Activated T-helper 1 cell treated with anti-CD3 and anti-CD28 coated beads, Interleukin-12 subunit alpha, Interleukin-12 subunit beta, Interleukin-2, Interleukin-4 antibody, amounts not matched to agents 30 ng/mL and 10 ng/mL and 1 ng/mL, durations not matched to agents 14 hours and 24 hours and 36 hours (primary cell): ENCODE measurements at regions of chr10 and their contacts with region 1.

Region 1: GRCh38 chr10:96831867-96832720 is at the start of gene LCOR:
- DNase-seq: peak; percentile 76
- H3K4me3 Mint-ChIP-seq: peak within 1 kb of the TSS; percentile 89
- H3K27ac Mint-ChIP-seq: peak within 1 kb of the TSS; percentile 96
- H3K4me1 Mint-ChIP-seq: peaks cover 53% of the 10 kb centered on the region
- H3K27me3 Mint-ChIP-seq: peaks cover 2% of the 10 kb centered on the region
- total RNA-seq, gene LCOR: 26.2 and 31.9 TPM in 2 replicates

Region 2: DNA sequence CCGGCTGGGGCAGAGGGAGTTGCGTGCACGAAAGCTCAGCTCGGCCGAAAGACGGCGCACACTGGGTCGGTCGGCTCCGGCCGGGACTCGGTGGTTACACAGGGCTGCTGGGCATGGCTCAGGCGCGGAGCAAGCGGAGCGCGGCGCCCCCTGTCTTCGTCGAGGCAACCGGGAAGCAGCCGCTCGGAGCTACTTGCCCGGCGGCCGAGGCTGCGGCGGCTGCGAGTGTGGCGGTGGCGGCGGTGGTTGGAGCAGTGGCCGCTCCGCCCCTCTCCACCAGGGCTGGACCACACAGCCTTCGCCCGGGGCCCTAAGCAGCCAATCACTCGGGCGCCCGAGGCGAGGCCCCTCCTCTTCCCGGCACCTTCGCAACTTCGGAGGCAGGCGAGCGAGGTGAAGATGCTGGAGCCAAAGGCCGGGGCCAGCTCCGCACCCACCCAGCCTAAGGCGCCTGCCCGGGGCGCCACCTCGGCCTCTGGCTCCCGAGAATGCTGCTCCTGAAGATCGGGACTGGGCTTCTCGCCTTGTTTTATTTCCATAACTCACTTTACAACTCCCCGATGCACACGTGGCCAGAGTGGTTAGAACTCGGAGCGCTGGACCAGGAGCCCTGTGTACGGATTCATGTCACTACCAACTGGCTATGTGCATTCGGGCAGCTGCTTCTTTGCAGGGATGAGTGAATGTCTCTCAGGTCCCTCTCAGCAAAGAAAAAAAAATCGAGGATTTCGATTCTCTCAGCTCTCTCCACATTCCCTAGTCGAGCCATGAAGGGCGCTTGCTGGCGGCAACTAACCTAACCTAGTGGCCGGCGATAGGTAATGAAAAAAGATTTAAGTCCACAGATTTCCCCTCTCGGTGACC is 318.2 kb before region 1 on chr10 and contains the start of gene TLL2:
- intact Hi-C with region 1: loop called (anchors 2 kb)
- DNase-seq: peak; percentile 63
- H3K4me3 Mint-ChIP-seq: peak within 1 kb of the TSS; percentile 66
- H3K27ac Mint-ChIP-seq: no peak within 1 kb of the TSS
- H3K4me1 Mint-ChIP-seq: peaks cover 7% of the 10 kb centered on the region
- H3K27me3 Mint-ChIP-seq: peaks cover 33% of the 10 kb centered on the region
- total RNA-seq, gene TLL2: 0.07 TPM in 1 of 2 replicates, not detected in the other

Region 3: DNA sequence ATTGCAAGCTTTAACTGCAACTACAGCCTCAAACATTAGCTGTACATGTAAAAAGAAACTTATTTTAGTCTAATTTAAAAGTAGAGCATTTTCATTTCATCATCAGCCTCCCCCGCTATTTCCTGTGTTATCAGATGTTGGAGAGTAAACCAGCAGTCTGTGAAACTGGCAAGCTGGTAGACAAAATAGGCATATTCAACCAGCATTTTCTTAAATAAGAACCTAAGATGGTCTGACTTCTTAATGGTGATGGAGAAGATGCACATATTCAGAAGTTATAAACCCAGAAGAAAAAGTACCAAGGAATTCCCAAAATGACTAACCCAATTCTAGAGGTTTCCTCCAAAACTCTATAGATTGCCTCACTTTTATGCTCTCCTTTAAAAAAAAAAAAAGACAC is 136.7 kb before region 1 on chr10:
- intact Hi-C with region 1: loop called (anchors 2 kb)
- DNase-seq: no peak
- H3K4me3 Mint-ChIP-seq: peak overlapping the region; percentile 35
- H3K27ac Mint-ChIP-seq: peak overlapping the region; percentile 61
- H3K4me1 Mint-ChIP-seq: peaks cover 37% of the 10 kb centered on the region
- H3K27me3 Mint-ChIP-seq: no peaks in the 10 kb centered on the region

Region 4: DNA sequence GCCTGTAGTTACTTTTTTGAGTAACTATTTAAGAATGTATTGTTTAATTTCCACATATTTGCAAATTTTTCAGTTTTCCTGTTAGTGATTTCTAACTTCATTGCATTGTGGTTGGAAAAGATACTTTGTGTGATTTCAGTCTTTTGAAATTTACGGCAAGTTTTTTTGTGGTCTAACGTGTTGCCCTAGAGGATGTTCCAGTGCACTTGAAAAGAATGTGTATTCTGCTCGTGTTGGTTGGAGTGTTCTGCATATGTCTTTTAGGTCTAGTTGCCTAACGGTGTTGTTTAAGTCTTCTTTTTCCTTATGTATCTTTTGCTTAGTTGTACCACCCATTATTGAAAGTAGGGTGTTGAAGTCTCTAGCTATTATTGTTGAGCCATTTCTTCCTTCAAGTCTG is 59.7 kb after region 1 on chr10:
- intact Hi-C with region 1: loop called (anchors 2 kb)
- DNase-seq: no peak
- H3K4me3 Mint-ChIP-seq: no peak overlapping the region
- H3K27ac Mint-ChIP-seq: peak overlapping the region; percentile 62
- H3K4me1 Mint-ChIP-seq: peaks cover 48% of the 10 kb centered on the region
- H3K27me3 Mint-ChIP-seq: no peaks in the 10 kb centered on the region

Region 5: GRCh38 chr10:97016728-97017473 is 184.8 kb after region 1 on chr10:
- intact Hi-C with region 1: loop called (anchors 2 kb)
- DNase-seq: peak; percentile 6
- H3K4me3 Mint-ChIP-seq: peak overlapping the region; percentile 48
- H3K27ac Mint-ChIP-seq: peak overlapping the region; percentile 82
- H3K4me1 Mint-ChIP-seq: peaks cover 27% of the 10 kb centered on the region
- H3K27me3 Mint-ChIP-seq: peaks cover 2% of the 10 kb centered on the region

Region 6: DNA sequence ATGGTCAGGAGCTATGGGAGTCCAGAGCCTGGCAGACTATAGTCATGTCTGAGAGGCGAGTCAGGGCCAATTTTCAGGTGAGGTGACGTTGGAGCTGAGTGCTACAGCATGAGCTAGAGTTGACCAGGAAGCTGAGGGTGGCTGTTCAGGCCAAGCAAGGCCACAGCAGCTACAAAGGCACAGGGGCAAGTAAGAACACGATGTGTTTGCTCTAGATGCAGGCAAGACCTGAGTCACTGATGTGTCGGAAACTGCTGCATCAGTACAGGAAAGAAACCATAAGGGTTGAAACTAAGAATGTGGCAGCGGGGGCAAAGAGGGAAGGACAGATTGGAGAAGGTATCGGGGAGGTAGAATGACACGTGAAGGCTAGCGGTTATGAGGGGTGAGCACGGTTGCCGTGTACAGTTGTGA is 580.8 kb after region 1 on chr10:
- intact Hi-C with region 1: loop called (anchors 5 kb)
- DNase-seq: peak; percentile 52
- H3K4me3 Mint-ChIP-seq: peak overlapping the region; percentile 47
- H3K27ac Mint-ChIP-seq: peak overlapping the region; percentile 95
- H3K4me1 Mint-ChIP-seq: peaks cover 55% of the 10 kb centered on the region
- H3K27me3 Mint-ChIP-seq: no peaks in the 10 kb centered on the region

Region 7: DNA sequence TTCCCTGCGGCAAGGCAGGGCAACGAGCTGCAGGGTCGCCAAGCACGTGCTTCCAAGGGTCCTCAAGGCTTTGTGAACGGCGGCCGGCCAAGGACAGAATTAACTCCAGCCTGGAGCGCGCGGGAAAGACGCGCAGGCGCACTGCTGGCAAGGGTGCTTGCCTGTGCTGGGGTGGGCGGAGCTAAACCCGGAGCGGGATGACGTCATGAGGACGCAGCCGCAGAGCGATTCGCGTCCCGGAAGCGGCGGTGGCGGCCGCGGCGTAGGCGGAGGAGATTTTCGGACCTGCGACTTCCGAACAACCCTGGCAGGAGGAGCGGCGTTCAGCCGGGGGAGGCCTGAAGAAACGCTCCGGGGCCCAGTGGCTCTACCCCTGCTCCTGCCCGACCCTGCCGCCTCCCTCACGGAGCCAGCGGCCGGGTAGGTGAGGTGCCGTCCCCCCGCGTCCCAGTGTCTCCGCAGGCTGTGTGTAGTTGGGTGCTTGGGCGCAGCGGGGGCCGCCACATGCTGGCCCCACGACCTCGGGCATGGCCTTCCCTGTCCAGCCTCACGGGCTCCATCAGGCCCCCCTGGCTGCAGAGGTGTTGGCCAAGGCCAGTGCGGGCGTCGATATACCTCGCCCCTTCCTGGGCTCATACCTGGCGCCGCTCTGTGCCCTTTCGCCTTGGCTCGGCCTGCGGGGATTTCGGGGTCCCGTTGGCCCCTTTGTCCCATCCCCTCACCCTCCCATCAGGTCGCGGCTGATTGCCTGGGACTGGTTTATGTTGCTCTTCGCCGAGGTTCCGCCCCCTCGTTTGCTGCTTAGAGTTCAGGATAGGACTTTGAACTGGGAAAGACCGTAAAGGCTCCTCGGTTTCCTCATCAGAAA is 905.0 kb after region 1 on chr10 and contains the start of gene ZFYVE27:
- intact Hi-C with region 1: loop called (anchors 5 kb)
- DNase-seq: peak; percentile 95
- H3K4me3 Mint-ChIP-seq: peak within 1 kb of the TSS; percentile 93
- H3K27ac Mint-ChIP-seq: peak within 1 kb of the TSS; percentile 100
- H3K4me1 Mint-ChIP-seq: peaks cover 44% of the 10 kb centered on the region
- H3K27me3 Mint-ChIP-seq: peaks cover 2% of the 10 kb centered on the region
- total RNA-seq, gene ZFYVE27: 41.7 and 42.5 TPM in 2 replicates